Activated T-helper 2 cell treated with anti-CD3 and anti-CD28 coated beads, Interferon-gamma antibody, Interleukin-2, Interleukin-4, amounts not matched to agents 10 μg/mL and 5 μg/mL and 100 μg/mL, durations not matched to agents 14 hours and 24 hours and 36 hours (primary cell): ENCODE measurements at regions of chr1 and their contacts with region 1.

Region 1: GRCh38 chr1:192545896-192546521 is 29.6 kb upstream of the RGS1 start:
- DNase-seq: no peak
- H3K4me3 Mint-ChIP-seq: no peak overlapping the region
- H3K27ac Mint-ChIP-seq: peak overlapping the region; percentile 1
- H3K4me1 Mint-ChIP-seq: peaks cover 64% of the 10 kb centered on the region
- H3K27me3 Mint-ChIP-seq: no peaks in the 10 kb centered on the region

Region 2: GRCh38 chr1:192477630-192478029 is 68.4 kb before region 1 on chr1:
- intact Hi-C with region 1: no loop called
- DNase-seq: no peak
- H3K4me3 Mint-ChIP-seq: no peak overlapping the region
- H3K27ac Mint-ChIP-seq: no peak overlapping the region
- H3K4me1 Mint-ChIP-seq: peaks cover 3% of the 10 kb centered on the region
- H3K27me3 Mint-ChIP-seq: peaks cover 12% of the 10 kb centered on the region

Region 3: DNA sequence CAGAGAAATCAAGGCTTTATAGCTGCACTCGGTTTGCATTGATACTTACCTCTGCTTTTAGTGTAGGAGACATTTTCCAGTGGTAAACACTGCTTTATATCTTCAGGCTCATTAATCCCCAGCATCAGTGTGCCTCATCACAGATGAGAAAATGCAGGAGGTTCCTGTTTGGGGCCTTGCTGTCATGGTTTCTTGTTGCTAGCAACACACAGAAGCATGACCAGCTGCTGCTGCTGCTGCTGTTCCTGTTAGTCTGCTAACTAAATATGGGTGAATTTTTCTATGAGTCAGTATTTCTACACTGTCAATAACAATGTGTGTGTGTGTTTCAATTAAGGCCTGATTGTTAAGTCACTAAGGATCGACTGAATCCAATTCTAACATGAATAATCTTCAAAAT is 56.3 kb before region 1 on chr1:
- intact Hi-C with region 1: no loop called
- DNase-seq: no peak
- H3K4me3 Mint-ChIP-seq: no peak overlapping the region
- H3K27ac Mint-ChIP-seq: no peak overlapping the region
- H3K4me1 Mint-ChIP-seq: no peaks in the 10 kb centered on the region
- H3K27me3 Mint-ChIP-seq: peaks cover 9% of the 10 kb centered on the region

Region 4: GRCh38 chr1:192530254-192530653 is 15.8 kb before region 1 on chr1:
- intact Hi-C with region 1: loop called (anchors 1 kb)
- DNase-seq: no peak
- H3K4me3 Mint-ChIP-seq: peak overlapping the region; percentile 9
- H3K27ac Mint-ChIP-seq: no peak overlapping the region
- H3K4me1 Mint-ChIP-seq: peaks cover 39% of the 10 kb centered on the region
- H3K27me3 Mint-ChIP-seq: peaks cover 9% of the 10 kb centered on the region

Region 5: DNA sequence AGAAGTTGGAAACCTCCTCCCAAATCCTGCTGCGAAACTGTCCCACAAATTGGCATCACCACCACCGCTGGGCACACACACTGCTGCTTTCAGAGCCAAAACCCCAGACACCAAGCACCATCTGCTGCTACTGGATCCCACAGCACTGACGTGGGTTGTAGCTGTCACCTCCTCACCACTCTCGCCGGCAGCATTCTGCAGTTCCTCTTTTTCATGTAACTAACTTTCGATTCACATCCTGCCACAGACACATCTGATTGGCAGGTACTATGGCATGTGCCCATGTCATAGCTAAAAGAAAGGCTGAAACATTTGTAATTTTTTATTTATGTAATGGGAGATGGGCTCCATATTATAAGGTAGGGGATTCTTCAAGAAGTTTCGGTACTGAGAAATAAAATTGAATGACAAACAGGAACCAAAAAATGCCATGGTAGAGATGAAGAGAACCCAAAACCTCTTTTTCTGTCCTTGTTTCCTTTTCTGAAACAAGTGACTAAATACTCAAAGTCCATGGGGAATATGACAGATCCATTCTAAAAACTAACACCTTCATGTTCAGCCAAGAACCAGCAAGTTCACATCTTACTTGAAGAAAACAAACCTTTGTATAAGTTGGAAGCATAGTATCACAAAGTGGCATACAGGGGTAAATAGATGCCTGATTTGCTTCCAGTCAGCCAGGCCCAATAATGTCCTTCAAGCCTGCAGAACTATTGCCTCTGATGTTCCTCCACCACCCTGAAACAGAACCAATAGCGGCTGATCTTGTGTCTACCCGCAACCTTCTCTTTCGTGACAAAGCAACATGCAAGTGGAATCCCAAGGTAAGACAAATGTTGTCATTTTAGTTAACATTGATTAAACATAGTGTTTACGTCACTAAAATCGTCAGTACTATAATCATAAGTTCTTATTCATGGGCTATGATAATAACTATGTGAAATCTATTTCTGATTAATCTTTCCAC is 63.4 kb after region 1 on chr1:
- intact Hi-C with region 1: loop called (anchors 2 kb)
- DNase-seq: peak; percentile 46
- H3K4me3 Mint-ChIP-seq: peak overlapping the region; percentile 22
- H3K27ac Mint-ChIP-seq: no peak overlapping the region
- H3K4me1 Mint-ChIP-seq: peaks cover 12% of the 10 kb centered on the region
- H3K27me3 Mint-ChIP-seq: peaks cover 2% of the 10 kb centered on the region

Region 6: DNA sequence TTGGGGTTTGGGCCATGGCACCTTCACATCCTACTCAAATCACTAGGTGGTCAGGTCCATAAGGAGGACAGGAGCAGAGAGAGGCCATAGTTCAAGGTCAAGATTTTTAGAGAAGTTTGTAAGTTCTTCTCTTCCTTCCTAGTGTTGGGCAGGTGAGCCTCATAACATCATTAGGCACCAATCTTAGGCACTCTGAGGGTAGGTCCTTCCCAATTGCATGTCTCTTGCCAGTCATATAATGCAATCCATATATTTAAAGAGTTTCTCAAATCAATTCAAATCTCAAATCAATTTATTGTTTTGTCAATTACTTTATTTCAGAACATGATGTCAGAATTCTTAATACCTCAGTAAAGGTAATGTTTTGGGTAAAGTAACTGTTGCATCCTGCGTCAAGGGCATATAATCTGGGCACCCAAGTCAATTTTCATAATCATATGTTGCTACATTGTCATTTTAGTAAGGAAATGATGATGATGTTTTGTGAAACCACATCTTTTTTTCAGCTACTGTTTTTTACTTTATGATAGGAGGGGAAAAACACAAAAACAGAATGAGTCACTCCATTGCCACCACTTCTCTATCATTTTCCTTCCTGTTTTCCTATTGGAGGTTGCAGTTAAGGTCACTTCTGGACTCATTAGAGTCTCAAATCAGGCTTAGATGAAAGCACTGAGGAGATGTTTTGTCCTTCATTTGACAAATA is 390.5 kb after region 1 on chr1:
- intact Hi-C with region 1: loop called (anchors 2 kb)
- DNase-seq: no peak
- H3K4me3 Mint-ChIP-seq: no peak overlapping the region
- H3K27ac Mint-ChIP-seq: peak overlapping the region; percentile 53
- H3K4me1 Mint-ChIP-seq: peaks cover 22% of the 10 kb centered on the region
- H3K27me3 Mint-ChIP-seq: no peaks in the 10 kb centered on the region

Region 7: GRCh38 chr1:193121616-193122593 is 575.9 kb after region 1 on chr1 and contains the start of gene CDC73:
- intact Hi-C with region 1: loop called (anchors 10 kb)
- DNase-seq: peak; percentile 97
- H3K4me3 Mint-ChIP-seq: peak within 1 kb of the TSS; percentile 99
- H3K27ac Mint-ChIP-seq: peak within 1 kb of the TSS; percentile 93
- H3K4me1 Mint-ChIP-seq: peaks cover 49% of the 10 kb centered on the region
- H3K27me3 Mint-ChIP-seq: peaks cover 8% of the 10 kb centered on the region
- total RNA-seq, gene CDC73: 47.0 and 53.3 TPM in 2 replicates